Cardiac septum (tissue), 1 donor: ENCODE measurements at regions of chr1 and their contacts with region 1.

Region 1: GRCh38 chr1:211323156-211324063 is 3.2 kb upstream of the TRAF5 start:
- DNase-seq: no peak

Region 2: GRCh38 chr1:211382714-211383480 is 59.5 kb after region 1 on chr1:
- intact Hi-C with region 1: loop called (anchors 2 kb)
- DNase-seq: peak; percentile 99

Region 3: GRCh38 chr1:211469938-211470529 is 146.6 kb after region 1 on chr1:
- intact Hi-C with region 1: loop called (anchors 5 kb)
- DNase-seq: no peak

Region 4: DNA sequence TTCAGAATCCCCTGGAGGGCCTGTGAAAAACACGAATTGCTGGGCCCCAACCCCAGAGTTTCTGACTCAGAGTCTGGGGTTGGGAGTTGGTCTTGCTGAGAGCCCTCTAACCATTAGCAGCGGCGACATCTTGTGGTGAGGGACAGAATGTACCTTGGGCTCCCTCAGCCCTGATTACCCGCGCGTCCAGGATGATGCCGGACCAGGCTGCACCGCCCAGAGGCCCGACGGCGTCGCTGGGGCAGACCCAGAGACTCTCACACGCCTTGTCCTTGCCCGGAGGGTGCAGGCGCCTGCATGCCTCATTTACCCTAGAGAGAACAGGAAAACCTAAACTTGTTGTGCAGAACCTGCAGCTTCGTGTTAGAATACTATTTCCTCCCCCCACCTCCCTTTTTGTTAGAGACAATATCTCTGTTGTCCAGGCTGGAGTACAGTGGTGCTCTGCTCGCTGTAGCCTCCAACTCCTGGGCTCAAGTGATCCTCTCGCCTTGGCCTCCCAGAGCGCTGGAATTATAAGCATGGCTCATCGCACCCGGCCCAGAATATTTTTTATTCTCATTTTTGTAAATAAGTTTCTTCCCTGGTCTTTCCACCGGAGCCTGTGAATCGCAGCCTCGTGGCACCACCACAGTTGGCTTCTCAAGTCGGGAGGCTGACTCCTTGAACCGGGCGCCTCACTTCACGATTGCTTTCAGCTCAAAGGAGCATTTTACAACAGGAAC is 190.8 kb after region 1 on chr1:
- intact Hi-C with region 1: loop called (anchors 5 kb)
- DNase-seq: peak; percentile 87

Region 5: GRCh38 chr1:211654838-211655787 is 331.7 kb after region 1 on chr1:
- intact Hi-C with region 1: loop called (anchors 10 kb)
- DNase-seq: peak; percentile 92

Region 6: DNA sequence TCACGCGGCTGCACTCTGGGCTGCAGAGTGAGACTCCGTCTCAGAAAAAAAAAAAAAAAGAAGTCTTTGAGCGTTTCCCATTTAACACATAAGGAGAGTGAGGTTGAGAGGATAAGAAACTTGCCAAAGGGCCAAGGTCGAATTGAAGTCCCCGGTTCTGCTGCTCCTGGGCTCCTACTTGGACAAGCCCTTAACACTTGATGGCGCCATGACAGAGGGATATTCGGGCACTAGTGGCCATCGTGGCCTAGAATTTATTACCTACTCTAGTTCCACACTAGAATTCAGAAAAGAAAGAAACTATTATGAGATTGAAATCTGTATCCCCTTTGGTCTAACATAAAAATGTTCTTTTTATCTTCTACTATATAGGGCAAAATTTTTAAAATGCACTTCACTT is 417.7 kb after region 1 on chr1:
- intact Hi-C with region 1: no loop called
- DNase-seq: no peak